Right ventricle myocardium superior (tissue), 1 donor: ENCODE measurements at regions of chr17 and their contacts with region 1.

Region 1: GRCh38 chr17:49798182-49798581 is 9.7 kb downstream of the KAT7 start:
- DNase-seq: no peak
- ATAC-seq: peak; percentile 36

Region 2: GRCh38 chr17:49843774-49844350 is 45.7 kb after region 1 on chr17:
- intact Hi-C with region 1: loop called (anchors 10 kb)
- DNase-seq: no peak
- ATAC-seq: no peak